OCI-LY7 (cell line): ENCODE measurements at regions of chr5 and their contacts with region 1.

Region 1: GRCh38 chr5:56270568-56271392 is 37.6 kb upstream of the ANKRD55 start:
- DNase-seq: peak; percentile 78
- H3K4me3 ChIP-seq: no peak overlapping the region
- H3K27ac ChIP-seq: no peak overlapping the region
- H3K4me1 ChIP-seq: no peaks in the 10 kb centered on the region
- CTCF ChIP-seq: peak; percentile 93

Region 2: GRCh38 chr5:55421074-55421529 is 849.7 kb before region 1 on chr5:
- CTCF ChIA-PET with region 1: no interaction called
- POLR2A ChIA-PET with region 1: no interaction called
- intact Hi-C with region 1: no loop called
- DNase-seq: no peak
- H3K4me3 ChIP-seq: no peak overlapping the region
- H3K27ac ChIP-seq: no peak overlapping the region
- H3K4me1 ChIP-seq: no peaks in the 10 kb centered on the region
- CTCF ChIP-seq: no peak

Region 3: GRCh38 chr5:55936100-55936693 is 334.6 kb before region 1 on chr5:
- CTCF ChIA-PET with region 1: interaction called, 6 read pairs
- POLR2A ChIA-PET with region 1: interaction called, 3 read pairs
- intact Hi-C with region 1: loop called (anchors 1 kb)
- DNase-seq: peak; percentile 80
- H3K4me3 ChIP-seq: no peak overlapping the region
- H3K27ac ChIP-seq: no peak overlapping the region
- H3K4me1 ChIP-seq: no peaks in the 10 kb centered on the region
- CTCF ChIP-seq: peak; percentile 98

Region 4: GRCh38 chr5:56215019-56215830 is 55.6 kb before region 1 on chr5:
- CTCF ChIA-PET with region 1: no interaction called
- POLR2A ChIA-PET with region 1: no interaction called
- intact Hi-C with region 1: no loop called
- DNase-seq: no peak
- H3K4me3 ChIP-seq: no peak overlapping the region
- H3K27ac ChIP-seq: no peak overlapping the region
- H3K4me1 ChIP-seq: no peaks in the 10 kb centered on the region
- CTCF ChIP-seq: no peak

Region 5: GRCh38 chr5:56670118-56670483 is 399.3 kb after region 1 on chr5:
- CTCF ChIA-PET with region 1: no interaction called
- POLR2A ChIA-PET with region 1: no interaction called
- intact Hi-C with region 1: loop called (anchors 10 kb)
- DNase-seq: peak; percentile 98
- H3K4me3 ChIP-seq: peak overlapping the region; percentile 57
- H3K27ac ChIP-seq: peak overlapping the region; percentile 97
- H3K4me1 ChIP-seq: peaks cover 65% of the 10 kb centered on the region
- CTCF ChIP-seq: no peak

Region 6: DNA sequence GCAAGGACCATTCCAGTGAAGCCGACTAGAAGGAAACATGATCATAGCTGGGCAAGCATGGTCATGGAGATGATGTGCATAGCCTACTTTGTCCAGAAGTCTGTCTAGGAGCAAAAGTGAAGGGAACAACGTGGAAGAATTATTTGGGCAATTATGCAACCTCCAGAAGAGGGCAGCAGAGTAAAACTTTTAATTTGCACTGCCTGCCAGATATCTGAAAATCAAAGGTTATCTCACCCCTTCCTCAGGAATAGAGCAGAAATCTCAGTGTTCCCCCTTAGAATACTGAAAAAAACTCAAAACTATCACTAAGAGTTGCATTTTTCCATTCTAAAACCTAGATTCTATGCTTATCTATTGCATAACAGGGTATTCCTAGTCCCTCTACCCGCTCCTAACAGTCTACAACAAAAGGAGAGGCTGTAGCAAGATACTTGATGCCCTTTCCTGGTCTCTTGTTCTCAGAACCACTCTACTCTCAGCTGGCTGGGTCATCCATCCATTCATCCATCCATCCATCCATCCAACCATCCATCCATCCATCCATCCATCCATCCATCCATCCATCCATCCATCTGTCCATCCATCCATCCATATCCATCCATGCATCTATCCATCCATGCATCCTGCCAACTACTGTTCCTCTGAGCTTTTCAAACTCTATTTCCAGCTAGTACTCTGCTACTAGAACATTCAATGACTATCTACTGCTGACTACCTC is 630.2 kb after region 1 on chr5:
- CTCF ChIA-PET with region 1: interaction called, 3 read pairs
- POLR2A ChIA-PET with region 1: no interaction called
- intact Hi-C with region 1: loop called (anchors 2 kb)
- DNase-seq: peak; percentile 65
- H3K4me3 ChIP-seq: no peak overlapping the region
- H3K27ac ChIP-seq: no peak overlapping the region
- H3K4me1 ChIP-seq: no peaks in the 10 kb centered on the region
- CTCF ChIP-seq: peak; percentile 88

Region 7: DNA sequence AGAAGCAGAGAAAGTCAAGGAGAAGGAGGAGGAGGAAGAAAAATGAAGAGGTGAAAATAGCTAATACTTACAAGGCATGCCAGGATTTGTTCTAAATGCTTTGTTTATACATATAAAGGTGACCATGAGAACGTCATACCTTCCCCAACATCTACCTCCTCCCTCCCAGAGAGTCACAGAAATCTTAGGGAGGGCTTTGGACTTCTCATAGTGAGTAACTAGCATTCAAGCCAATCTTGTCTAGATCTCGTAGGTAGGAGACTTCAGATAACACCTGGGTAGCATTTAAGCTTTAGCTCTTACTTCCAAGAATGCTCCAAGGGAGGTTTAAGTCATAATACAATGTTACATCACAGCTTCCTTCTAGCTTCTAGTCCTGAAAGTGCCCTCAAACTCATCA is 866.6 kb after region 1 on chr5:
- CTCF ChIA-PET with region 1: no interaction called
- POLR2A ChIA-PET with region 1: no interaction called
- intact Hi-C with region 1: loop called (anchors 2 kb)
- DNase-seq: no peak
- H3K4me3 ChIP-seq: no peak overlapping the region
- H3K27ac ChIP-seq: no peak overlapping the region
- H3K4me1 ChIP-seq: no peaks in the 10 kb centered on the region
- CTCF ChIP-seq: no peak

Region 8: DNA sequence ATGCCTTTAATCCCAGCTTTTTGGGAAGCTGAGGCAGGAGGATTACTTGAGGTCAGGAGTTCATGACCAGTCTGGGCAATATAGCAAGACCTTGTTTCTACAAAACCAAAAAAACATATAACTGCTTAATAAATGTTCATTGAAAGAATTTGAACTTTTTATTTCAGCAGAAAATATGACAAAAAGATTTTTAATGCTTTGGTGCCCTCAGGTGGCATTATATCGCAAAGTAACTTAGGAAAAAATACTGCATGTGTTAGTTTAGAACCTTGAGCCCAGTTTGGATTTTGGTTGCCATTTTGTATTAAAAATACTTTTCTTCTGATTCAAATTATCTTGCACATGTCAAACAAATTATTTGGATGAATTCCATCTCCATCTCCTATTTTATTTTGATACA is 1006.3 kb after region 1 on chr5:
- CTCF ChIA-PET with region 1: no interaction called
- POLR2A ChIA-PET with region 1: interaction called, 3 read pairs
- intact Hi-C with region 1: loop called (anchors 2 kb)
- DNase-seq: peak; percentile 36
- H3K4me3 ChIP-seq: no peak overlapping the region
- H3K27ac ChIP-seq: no peak overlapping the region
- H3K4me1 ChIP-seq: no peaks in the 10 kb centered on the region
- CTCF ChIP-seq: peak; percentile 77